Transverse colon (tissue), 4 donors: ENCODE measurements at regions of chr11 and their contacts with region 1.

Region 1: GRCh38 chr11:62664405-62665074 is 470 bp downstream of the C11orf98 start:
- DNase-seq: peak; percentile 74
- H3K4me3 ChIP-seq: peak overlapping the region; percentile 55 to 77 (median 72)
- H3K27ac ChIP-seq: peak overlapping the region; percentile 93 to 97 (median 94)
- H3K4me1 ChIP-seq: peaks cover 18 to 44% (median 33%) of the 10 kb centered on the region in 4 donors
- H3K27me3 ChIP-seq: no peaks in the 10 kb centered on the region
- CTCF ChIP-seq: no peak
- EP300 ChIP-seq: no peak
- POLR2A ChIP-seq: no peak

Region 2: DNA sequence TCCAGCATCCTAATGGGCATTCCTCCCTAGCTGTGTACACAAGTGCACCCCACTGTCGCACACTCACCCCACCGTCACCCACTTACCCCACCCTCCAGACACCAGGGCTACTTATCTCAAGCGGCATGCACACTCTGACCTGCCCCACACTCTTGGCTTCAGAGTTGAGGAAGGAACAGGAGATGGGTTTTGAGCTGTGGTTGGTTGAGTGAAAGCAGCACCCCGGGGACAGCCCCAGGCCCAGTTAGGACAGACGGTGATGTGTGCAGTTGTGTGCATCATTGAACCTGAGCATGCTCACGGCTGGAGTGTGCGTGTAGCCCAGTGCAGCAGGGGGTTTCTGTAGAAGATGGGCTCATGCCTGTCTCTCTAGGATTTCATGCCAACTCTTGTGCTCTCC is 150.4 kb before region 1 on chr11:
- in situ Hi-C with region 1: no loop called
- intact Hi-C with region 1: no loop called
- DNase-seq: no peak
- H3K4me3 ChIP-seq: no peak overlapping the region
- H3K27ac ChIP-seq: no peak overlapping the region
- H3K4me1 ChIP-seq: peaks cover 5 to 16% (median 10%) of the 10 kb centered on the region in 4 donors
- H3K27me3 ChIP-seq: no peaks in the 10 kb centered on the region
- CTCF ChIP-seq: no peak
- EP300 ChIP-seq: no peak
- POLR2A ChIP-seq: no peak

Region 3: DNA sequence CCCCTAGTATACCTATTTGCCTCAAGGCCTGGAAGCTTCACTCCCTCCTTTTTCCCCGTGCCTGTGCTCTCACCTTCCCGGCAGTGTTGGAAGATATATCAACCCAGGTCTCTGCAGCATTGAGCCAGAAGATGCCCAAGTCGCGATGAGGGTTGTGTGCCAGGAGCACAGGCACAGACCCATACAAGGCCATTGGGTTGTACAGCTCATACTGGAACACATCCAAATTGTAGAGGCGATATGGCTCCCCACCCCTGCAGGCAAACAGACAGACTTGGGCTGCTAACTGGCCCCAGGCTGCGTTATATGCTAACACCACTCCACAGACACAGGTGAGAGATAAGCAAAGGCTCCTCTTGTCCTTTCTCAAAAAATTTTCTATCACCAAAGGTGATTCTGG is 32.0 kb before region 1 on chr11:
- in situ Hi-C with region 1: no loop called
- intact Hi-C with region 1: loop called (anchors 2 kb)
- DNase-seq: no peak
- H3K4me3 ChIP-seq: no peak overlapping the region
- H3K27ac ChIP-seq: no peak overlapping the region
- H3K4me1 ChIP-seq: no peaks in the 10 kb centered on the region
- H3K27me3 ChIP-seq: no peaks in the 10 kb centered on the region
- CTCF ChIP-seq: no peak
- EP300 ChIP-seq: no peak
- POLR2A ChIP-seq: no peak